GM10248 (cell line): ENCODE measurements at regions of chr6 and their contacts with region 1.

Region 1: DNA sequence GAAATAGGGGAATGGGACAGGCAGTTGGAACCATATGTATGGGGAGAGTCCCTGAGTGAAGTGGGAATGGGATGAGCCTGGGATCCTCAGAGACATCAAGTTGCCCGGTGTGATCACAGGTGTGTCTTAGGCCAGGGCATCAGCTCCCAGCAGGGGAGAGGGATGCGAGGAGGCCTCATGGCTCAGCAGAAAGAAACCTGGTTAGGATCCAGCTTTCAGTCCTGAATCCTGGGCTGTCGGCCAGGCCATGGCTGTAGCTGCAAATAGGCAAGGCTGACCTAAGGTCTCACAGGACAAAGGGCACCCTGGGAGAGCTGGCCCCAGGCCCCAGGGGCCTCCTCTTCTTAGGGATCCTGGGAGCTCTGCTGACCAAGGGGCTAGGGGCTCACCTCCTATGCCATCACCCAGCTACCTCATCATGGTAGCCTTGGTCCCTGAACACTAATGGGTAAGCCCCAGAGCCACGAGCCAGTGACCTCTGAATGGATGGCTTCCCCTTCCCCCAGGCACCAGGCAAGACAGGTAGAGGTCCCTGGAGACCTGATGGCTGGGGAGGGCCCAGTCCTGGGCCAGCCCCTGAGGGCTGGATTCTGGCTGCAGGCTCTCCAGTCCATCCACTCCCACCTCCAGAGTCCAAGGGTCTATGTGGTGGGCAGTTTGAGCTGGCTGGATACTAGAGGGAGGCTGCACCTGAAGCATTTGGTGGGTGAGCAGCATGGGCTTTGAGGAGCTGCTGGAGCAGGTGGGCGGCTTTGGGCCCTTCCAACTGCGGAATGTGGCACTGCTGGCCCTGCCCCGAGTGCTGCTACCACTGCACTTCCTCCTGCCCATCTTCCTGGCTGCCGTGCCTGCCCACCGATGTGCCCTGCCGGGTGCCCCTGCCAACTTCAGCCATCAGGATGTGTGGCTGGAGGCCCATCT is at the start of gene SLC22A7:
- DNase-seq: no peak
- CTCF ChIP-seq: no peak

Region 2: DNA sequence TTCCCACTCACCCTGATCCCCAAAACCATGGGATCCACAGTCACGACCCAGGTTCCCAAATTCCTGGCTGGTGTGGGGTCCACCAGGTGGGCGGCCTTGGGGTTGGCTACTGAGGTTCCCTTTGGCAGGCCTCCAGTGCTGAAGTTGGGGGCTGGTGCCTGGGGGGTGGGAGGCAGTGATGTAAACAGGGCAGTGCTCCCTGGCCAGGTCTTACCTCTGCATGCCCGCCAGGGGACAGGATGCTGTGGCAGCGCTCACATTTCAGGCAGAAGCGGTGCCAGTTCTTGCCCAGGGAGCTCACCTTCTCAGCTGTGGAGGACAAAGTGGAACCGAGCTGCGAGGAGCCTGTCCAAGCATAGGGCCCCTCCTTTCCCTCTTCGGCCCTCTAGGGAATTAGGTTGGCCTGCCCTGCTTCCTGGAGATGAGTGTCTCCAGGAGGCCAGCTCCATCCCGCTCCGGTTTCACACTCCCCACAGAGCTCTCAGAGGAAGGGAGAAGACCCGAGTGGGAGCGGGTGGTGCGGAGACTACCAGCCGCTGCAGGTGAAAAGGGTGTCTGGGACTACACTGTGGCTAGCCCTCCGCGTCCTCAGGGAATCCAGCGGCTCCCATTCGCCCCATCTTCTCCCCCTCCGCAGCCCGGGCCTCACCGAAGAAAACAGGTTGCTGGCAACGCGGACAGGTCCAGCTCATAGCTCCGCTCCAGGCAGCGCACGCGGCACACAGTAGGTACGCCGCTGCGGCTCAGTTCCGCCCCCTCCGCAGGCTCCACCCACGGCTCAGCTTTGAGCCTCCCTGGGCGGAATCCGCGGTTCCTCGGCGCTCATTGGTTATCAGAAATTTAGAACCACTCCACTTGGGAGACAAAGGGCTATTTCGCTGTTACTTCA is 10.4 kb after region 1 on chr6 and contains the start of gene CRIP3:
- CTCF ChIA-PET with region 1: interaction called, 24 read pairs
- POLR2A ChIA-PET with region 1: no interaction called
- DNase-seq: peak; percentile 57
- CTCF ChIP-seq: peak; percentile 27

Region 3: GRCh38 chr6:43313813-43314212 is 15.9 kb after region 1 on chr6:
- CTCF ChIA-PET with region 1: interaction called, 24 read pairs
- POLR2A ChIA-PET with region 1: no interaction called
- DNase-seq: no peak
- CTCF ChIP-seq: no peak